ENCODE measurements at regions of chr3 and their contacts with region 1.

Region 1: DNA sequence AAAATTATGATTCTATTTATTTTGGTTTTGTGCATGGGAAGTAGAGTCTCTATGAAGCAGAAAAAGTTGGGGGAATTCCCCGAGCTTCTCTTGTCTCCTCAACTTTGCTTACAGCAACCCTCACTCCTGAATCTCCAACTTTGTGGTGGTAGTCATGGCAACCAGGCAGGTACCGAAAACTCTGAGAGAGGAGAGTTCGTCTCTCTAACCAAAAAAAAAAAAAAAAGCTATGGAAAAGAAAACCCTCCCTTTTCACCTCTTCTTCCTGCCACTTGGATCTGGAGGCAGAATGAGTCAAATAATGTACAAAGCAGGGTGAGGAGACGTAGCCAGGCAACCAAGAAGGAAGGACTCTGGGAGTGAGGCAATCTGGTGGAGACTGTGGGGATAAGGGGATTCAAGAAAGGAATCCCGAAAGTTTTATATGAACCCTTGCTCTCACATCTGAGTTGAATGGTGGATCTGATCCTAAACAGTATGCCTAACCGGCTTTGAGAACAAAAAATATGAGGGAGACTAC is 108.1 kb downstream of the PLOD2 start:
- DNase-seq: no peak
- H3K4me3 ChIP-seq: no peak overlapping the region
- H3K27ac ChIP-seq: no peak overlapping the region
- H3K4me1 ChIP-seq: no peaks in the 10 kb centered on the region
- H3K27me3 ChIP-seq: no peaks in the 10 kb centered on the region
- CTCF ChIP-seq: no peak

Region 2: DNA sequence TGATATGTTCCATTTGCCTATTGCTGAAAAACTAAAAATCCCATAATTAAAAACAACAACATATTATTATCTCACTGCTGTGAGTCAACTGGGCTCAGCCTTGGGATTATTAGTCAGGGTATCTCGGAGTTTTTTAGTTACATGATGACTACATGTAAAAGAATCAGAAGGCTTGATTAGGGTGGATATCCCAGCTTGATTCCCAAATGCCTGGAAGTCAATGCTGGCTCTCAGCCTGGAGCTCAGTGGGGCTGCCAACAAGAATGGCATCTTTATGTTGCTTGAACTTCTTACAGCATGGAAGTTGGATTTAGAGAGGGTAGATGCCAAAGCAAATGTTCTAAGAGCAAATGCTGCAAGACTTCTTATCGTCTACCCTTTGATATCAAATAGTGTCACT is 170.4 kb before region 1 on chr3:
- intact Hi-C with region 1: no loop called
- DNase-seq: no peak
- H3K4me3 ChIP-seq: no peak overlapping the region
- H3K27ac ChIP-seq: no peak overlapping the region
- H3K4me1 ChIP-seq: no peaks in the 10 kb centered on the region
- H3K27me3 ChIP-seq: no peaks in the 10 kb centered on the region
- CTCF ChIP-seq: no peak

Region 3: DNA sequence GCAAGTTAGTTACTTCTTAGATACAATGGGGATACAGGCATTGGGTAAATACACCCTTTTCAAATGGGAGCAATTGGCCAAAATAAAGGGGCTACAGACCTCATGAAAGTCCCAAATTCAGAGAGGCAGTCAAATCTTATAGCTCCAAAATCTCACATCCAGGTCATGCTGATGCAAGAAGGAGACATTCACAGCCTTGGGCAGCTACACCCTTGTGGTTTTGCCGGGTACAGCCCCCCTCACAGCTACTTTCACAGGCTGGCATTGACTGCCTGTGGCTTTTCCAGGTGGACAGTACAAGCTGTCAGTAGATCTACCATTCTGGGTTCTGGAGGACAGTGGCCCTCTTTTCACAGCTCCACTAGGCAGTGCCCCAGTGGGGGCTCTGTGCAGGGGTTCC is 509.0 kb after region 1 on chr3:
- intact Hi-C with region 1: loop called (anchors 10 kb)
- DNase-seq: no peak
- H3K4me3 ChIP-seq: no peak overlapping the region
- H3K27ac ChIP-seq: no peak overlapping the region
- H3K4me1 ChIP-seq: no peaks in the 10 kb centered on the region
- H3K27me3 ChIP-seq: no peaks in the 10 kb centered on the region
- CTCF ChIP-seq: no peak